ENCODE measurements at regions of chr15 and their contacts with region 1.

Region 1: DNA sequence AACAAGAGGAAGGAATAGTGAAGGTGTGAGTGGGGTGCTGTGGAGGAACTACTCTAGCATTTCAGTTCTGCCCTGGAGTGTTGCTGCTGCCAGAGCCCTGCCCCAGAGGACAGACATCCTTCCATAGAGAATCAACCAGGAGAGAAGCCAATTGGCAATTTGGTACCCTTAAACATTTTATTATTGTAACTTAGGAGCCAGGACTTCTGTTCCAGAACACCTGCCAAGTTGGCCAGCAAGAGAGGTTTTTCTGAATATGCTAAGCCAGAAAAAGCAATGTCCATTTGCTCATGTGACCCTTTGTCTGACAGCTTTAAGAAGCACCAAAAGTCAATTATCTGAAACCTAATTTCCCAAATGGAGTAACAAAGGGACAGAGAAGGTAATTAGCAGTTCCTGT is 264.9 kb downstream of the MEX3B start:
- DNase-seq: no peak
- H3K4me3 ChIP-seq: no peak overlapping the region
- H3K4me3 Mint-ChIP-seq: no peak overlapping the region
- H3K27ac ChIP-seq: no peak overlapping the region
- H3K27ac Mint-ChIP-seq: no peak overlapping the region
- H3K4me1 ChIP-seq: no peaks in the 10 kb centered on the region
- H3K4me1 Mint-ChIP-seq: peaks cover 5% of the 10 kb centered on the region
- H3K27me3 ChIP-seq: no peaks in the 10 kb centered on the region
- H3K27me3 Mint-ChIP-seq: peaks cover 0 to 3% (median 1%) of the 10 kb centered on the region in 3 donors
- CTCF ChIP-seq: no peak

Region 2: GRCh38 chr15:81728726-81729125 is 52.2 kb before region 1 on chr15:
- intact Hi-C with region 1: no loop called
- DNase-seq: no peak
- H3K4me3 ChIP-seq: no peak overlapping the region
- H3K4me3 Mint-ChIP-seq: no peak overlapping the region
- H3K27ac ChIP-seq: no peak overlapping the region
- H3K27ac Mint-ChIP-seq: no peak overlapping the region
- H3K4me1 ChIP-seq: no peaks in the 10 kb centered on the region
- H3K4me1 Mint-ChIP-seq: no peaks in the 10 kb centered on the region
- H3K27me3 ChIP-seq: no peaks in the 10 kb centered on the region
- H3K27me3 Mint-ChIP-seq: peaks cover 0 to 2% (median 1%) of the 10 kb centered on the region in 3 donors
- CTCF ChIP-seq: no peak

Region 3: GRCh38 chr15:81740416-81740815 is 40.5 kb before region 1 on chr15:
- intact Hi-C with region 1: loop called in 1 of 2 experiments (anchors 5 kb)
- DNase-seq: no peak
- H3K4me3 ChIP-seq: no peak overlapping the region
- H3K4me3 Mint-ChIP-seq: no peak overlapping the region
- H3K27ac ChIP-seq: no peak overlapping the region
- H3K27ac Mint-ChIP-seq: no peak overlapping the region
- H3K4me1 ChIP-seq: no peaks in the 10 kb centered on the region
- H3K4me1 Mint-ChIP-seq: no peaks in the 10 kb centered on the region
- H3K27me3 ChIP-seq: no peaks in the 10 kb centered on the region
- H3K27me3 Mint-ChIP-seq: peaks cover 0 to 2% (median 0%) of the 10 kb centered on the region in 3 donors
- CTCF ChIP-seq: no peak

Region 4: GRCh38 chr15:82072926-82073537 is 292.1 kb after region 1 on chr15:
- intact Hi-C with region 1: no loop called
- DNase-seq: no peak
- H3K4me3 ChIP-seq: no peak overlapping the region
- H3K4me3 Mint-ChIP-seq: no peak overlapping the region
- H3K27ac ChIP-seq: no peak overlapping the region
- H3K27ac Mint-ChIP-seq: no peak overlapping the region
- H3K4me1 ChIP-seq: no peaks in the 10 kb centered on the region
- H3K4me1 Mint-ChIP-seq: no peaks in the 10 kb centered on the region
- H3K27me3 ChIP-seq: no peaks in the 10 kb centered on the region
- H3K27me3 Mint-ChIP-seq: peaks cover 1 to 2% (median 1%) of the 10 kb centered on the region in 3 donors
- CTCF ChIP-seq: no peak

Measured in CD14-positive monocyte (primary cell).